ENCODE measurements at regions of chr19 and their contacts with region 1.

Region 1: GRCh38 chr19:24033301-24033962 is 53.6 kb upstream of the ZNF254 start:
- DNase-seq: peak; percentile 87 to 92
- H3K4me3 ChIP-seq: peak overlapping the region; percentile 47
- H3K4me3 Mint-ChIP-seq: peak overlapping the region; percentile 97
- H3K27ac Mint-ChIP-seq: peak overlapping the region; percentile 98
- H3K4me1 ChIP-seq: no peaks in the 10 kb centered on the region
- H3K4me1 Mint-ChIP-seq: no peaks in the 10 kb centered on the region
- H3K27me3 ChIP-seq: no peaks in the 10 kb centered on the region
- H3K27me3 Mint-ChIP-seq: no peaks in the 10 kb centered on the region
- CTCF ChIP-seq: peak in 1 of 2 experiments; percentile 2

Region 2: GRCh38 chr19:23974966-23975365 is 58.5 kb before region 1 on chr19:
- CTCF ChIA-PET with region 1: no interaction called
- POLR2A ChIA-PET with region 1: no interaction called
- intact Hi-C with region 1: no loop called
- DNase-seq: no peak
- H3K4me3 ChIP-seq: no peak overlapping the region
- H3K4me3 Mint-ChIP-seq: no peak overlapping the region
- H3K27ac Mint-ChIP-seq: no peak overlapping the region
- H3K4me1 ChIP-seq: no peaks in the 10 kb centered on the region
- H3K4me1 Mint-ChIP-seq: no peaks in the 10 kb centered on the region
- H3K27me3 ChIP-seq: no peaks in the 10 kb centered on the region
- H3K27me3 Mint-ChIP-seq: no peaks in the 10 kb centered on the region
- CTCF ChIP-seq: no peak

Region 3: DNA sequence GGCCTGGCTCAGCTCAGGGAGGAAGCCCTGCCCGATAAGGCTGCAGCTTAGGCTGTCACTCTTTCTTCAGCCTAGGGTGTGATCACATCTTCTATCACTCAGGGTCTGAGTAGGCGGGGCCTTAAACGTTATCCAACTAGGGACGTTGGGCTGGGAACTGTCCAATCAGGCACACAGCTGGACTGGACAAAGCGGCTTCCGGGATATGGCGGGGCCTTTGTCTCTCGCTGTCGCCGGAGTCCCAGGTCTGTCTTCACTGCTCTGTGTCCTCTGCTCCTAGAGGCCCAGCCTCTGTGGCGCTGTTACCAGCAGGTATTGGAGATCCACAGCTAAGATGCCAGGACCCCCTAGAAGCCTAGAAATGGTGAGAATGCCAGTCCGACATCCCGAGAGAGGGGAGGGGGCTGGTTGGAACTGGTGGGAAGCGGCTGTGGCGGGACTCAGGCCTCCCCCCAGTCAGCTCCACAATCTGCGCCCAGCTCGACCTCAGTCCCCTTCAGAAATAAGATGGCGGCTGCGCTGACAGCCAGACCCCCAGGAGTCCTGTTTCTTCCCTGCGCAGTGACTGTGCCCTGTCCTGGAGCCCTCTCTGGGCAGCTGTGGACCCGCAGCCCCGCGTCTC is 53.7 kb after region 1 on chr19 and contains the start of gene ZNF254:
- CTCF ChIA-PET with region 1: no interaction called
- POLR2A ChIA-PET with region 1: interaction called, 20 read pairs
- intact Hi-C with region 1: loop called (anchors 1 kb)
- DNase-seq: peak; percentile 92 to 96
- H3K4me3 ChIP-seq: peak within 1 kb of the TSS; percentile 86
- H3K4me3 Mint-ChIP-seq: peak within 1 kb of the TSS; percentile 87
- H3K27ac Mint-ChIP-seq: peak within 1 kb of the TSS; percentile 95
- H3K4me1 ChIP-seq: no peaks in the 10 kb centered on the region
- H3K4me1 Mint-ChIP-seq: no peaks in the 10 kb centered on the region
- H3K27me3 ChIP-seq: no peaks in the 10 kb centered on the region
- H3K27me3 Mint-ChIP-seq: no peaks in the 10 kb centered on the region
- CTCF ChIP-seq: no peak
- total RNA-seq, gene ZNF254: 16.3 and 16.5 TPM in 2 replicates

Region 4: GRCh38 chr19:24140099-24140498 is 106.7 kb after region 1 on chr19:
- CTCF ChIA-PET with region 1: no interaction called
- POLR2A ChIA-PET with region 1: no interaction called
- intact Hi-C with region 1: loop called (anchors 5 kb)
- DNase-seq: no peak
- H3K4me3 ChIP-seq: no peak overlapping the region
- H3K4me3 Mint-ChIP-seq: no peak overlapping the region
- H3K27ac Mint-ChIP-seq: no peak overlapping the region
- H3K4me1 ChIP-seq: peaks cover 21% of the 10 kb centered on the region
- H3K4me1 Mint-ChIP-seq: no peaks in the 10 kb centered on the region
- H3K27me3 ChIP-seq: no peaks in the 10 kb centered on the region
- H3K27me3 Mint-ChIP-seq: no peaks in the 10 kb centered on the region
- CTCF ChIP-seq: no peak

Region 5: GRCh38 chr19:24159707-24160106 is 126.3 kb after region 1 on chr19:
- CTCF ChIA-PET with region 1: no interaction called
- POLR2A ChIA-PET with region 1: no interaction called
- intact Hi-C with region 1: loop called (anchors 5 kb)
- DNase-seq: peak in 1 of 2 experiments; percentile 36
- H3K4me3 ChIP-seq: no peak overlapping the region
- H3K4me3 Mint-ChIP-seq: no peak overlapping the region
- H3K27ac Mint-ChIP-seq: no peak overlapping the region
- H3K4me1 ChIP-seq: no peaks in the 10 kb centered on the region
- H3K4me1 Mint-ChIP-seq: no peaks in the 10 kb centered on the region
- H3K27me3 ChIP-seq: no peaks in the 10 kb centered on the region
- H3K27me3 Mint-ChIP-seq: no peaks in the 10 kb centered on the region
- CTCF ChIP-seq: peak; percentile 38 to 48